WTC11 (cell line): ENCODE measurements at regions of chr4 and their contacts with region 1.

Region 1: DNA sequence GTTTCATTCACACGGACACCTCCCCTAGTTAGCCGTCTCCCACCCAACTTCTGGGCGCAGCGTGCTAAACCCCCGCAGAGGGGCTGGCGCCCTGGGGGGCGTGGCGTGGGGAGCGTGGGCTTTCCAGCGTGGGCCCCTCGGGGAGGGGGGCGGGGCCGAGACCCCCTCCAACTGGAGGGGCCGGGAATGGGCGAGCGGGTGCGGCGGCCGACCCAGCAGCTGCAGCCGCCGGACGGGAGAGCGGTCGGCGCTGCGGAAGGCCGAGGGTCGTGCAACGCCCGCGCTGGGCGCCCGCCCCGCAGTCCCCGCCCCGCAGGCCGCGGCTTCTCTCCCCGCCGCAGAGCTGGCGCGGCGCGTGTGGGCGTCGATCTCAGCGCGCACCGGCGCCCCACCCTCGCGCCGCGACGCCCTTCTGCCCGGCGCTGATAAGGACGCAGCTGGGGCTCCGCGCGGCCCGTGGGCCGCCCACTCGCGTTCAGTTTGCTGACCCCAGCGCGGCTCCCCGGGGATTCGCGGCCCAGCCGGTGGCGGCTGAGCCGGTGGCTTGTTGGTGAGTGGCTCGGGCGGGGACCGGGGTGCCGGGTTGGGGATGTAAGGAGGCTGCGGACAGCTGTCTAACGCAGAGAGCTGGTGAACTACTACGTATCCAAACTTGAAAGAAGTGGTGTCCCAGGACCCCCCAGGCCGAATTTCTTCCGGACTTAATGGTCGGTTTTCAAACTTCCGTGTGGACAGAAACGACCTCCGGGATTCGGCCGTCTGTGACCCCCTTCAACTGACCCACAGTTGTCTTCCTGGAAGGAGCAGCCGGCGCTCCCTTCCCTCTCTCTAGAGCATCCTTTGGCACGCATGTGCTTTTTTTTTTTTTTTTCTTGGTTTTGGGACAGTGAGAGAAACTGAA is 1.5 kb downstream of the FHDC1 start:
- DNase-seq: peak; percentile 37
- ATAC-seq: no peak
- H3K4me3 Mint-ChIP-seq: peak overlapping the region; percentile 84
- H3K27ac Mint-ChIP-seq: no peak overlapping the region
- H3K4me1 Mint-ChIP-seq: peaks cover 49% of the 10 kb centered on the region
- H3K27me3 Mint-ChIP-seq: peaks cover 27% of the 10 kb centered on the region
- CTCF ChIP-seq: no peak

Region 2: GRCh38 chr4:152779513-152780266 is 157.9 kb before region 1 on chr4 and contains the starts of genes ARFIP1 and TIGD4:
- CTCF ChIA-PET with region 1: interaction called, 11 read pairs
- POLR2A ChIA-PET with region 1: interaction called, 18 read pairs
- DNase-seq: peak; percentile 99
- ATAC-seq: peak; percentile 93
- H3K4me3 Mint-ChIP-seq: peak within 1 kb of the TSS; percentile 99
- H3K27ac Mint-ChIP-seq: peak within 1 kb of the TSS; percentile 100
- H3K4me1 Mint-ChIP-seq: peaks cover 27% of the 10 kb centered on the region
- H3K27me3 Mint-ChIP-seq: no peaks in the 10 kb centered on the region; the same call in 1 of the 2 replicates
- CTCF ChIP-seq: no peak
- total RNA-seq, gene ARFIP1: 29.2 to 35.3 TPM (median 31.2 TPM) in 3 replicates
- total RNA-seq, gene TIGD4: 1.9 to 2.5 TPM (median 2.0 TPM) in 3 replicates

Region 3: GRCh38 chr4:152807294-152807829 is 130.2 kb before region 1 on chr4:
- CTCF ChIA-PET with region 1: no interaction called
- POLR2A ChIA-PET with region 1: no interaction called
- DNase-seq: no peak
- ATAC-seq: no peak
- H3K4me3 Mint-ChIP-seq: no peak overlapping the region
- H3K27ac Mint-ChIP-seq: 0 out of 2 replicates have a peak overlapping the region, but pooled peaks have one; percentile 29
- H3K4me1 Mint-ChIP-seq: peaks cover 62% of the 10 kb centered on the region
- H3K27me3 Mint-ChIP-seq: peaks cover 9% of the 10 kb centered on the region
- CTCF ChIP-seq: no peak

Region 4: GRCh38 chr4:152850377-152850776 is 87.2 kb before region 1 on chr4:
- CTCF ChIA-PET with region 1: interaction called, 6 read pairs
- POLR2A ChIA-PET with region 1: interaction called, 11 read pairs
- DNase-seq: peak; percentile 25
- ATAC-seq: peak; percentile 89
- H3K4me3 Mint-ChIP-seq: peak overlapping the region; percentile 48
- H3K27ac Mint-ChIP-seq: peak overlapping the region; percentile 99
- H3K4me1 Mint-ChIP-seq: peaks cover 56% of the 10 kb centered on the region
- H3K27me3 Mint-ChIP-seq: peaks cover 4% of the 10 kb centered on the region; the same call in 1 of the 2 replicates
- CTCF ChIP-seq: no peak

Region 5: DNA sequence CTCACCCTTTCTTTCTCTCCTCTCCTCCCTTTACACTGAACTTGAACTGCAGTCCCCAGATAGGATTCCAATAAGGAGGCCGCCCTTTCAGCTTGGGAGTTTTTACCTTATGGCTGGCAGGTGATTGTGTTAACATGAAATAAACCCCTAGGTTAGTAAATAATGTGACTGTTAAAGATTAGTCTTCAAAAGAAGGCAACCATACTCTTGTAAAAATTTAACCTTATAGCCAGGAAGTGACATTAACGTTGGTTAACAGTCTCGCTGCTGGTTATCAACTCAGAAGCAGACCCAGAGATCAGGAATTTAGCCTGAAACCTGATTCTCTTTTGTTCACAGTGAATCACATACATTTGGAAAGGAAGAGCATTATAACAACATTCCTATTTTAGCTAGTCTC is 13.8 kb after region 1 on chr4:
- CTCF ChIA-PET with region 1: interaction called, 26 read pairs
- POLR2A ChIA-PET with region 1: interaction called, 11 read pairs
- DNase-seq: no peak
- ATAC-seq: peak; percentile 45
- H3K4me3 Mint-ChIP-seq: peak overlapping the region; percentile 10
- H3K27ac Mint-ChIP-seq: peak overlapping the region; percentile 98
- H3K4me1 Mint-ChIP-seq: peaks cover 65% of the 10 kb centered on the region
- H3K27me3 Mint-ChIP-seq: no peaks in the 10 kb centered on the region
- CTCF ChIP-seq: no peak

Region 6: DNA sequence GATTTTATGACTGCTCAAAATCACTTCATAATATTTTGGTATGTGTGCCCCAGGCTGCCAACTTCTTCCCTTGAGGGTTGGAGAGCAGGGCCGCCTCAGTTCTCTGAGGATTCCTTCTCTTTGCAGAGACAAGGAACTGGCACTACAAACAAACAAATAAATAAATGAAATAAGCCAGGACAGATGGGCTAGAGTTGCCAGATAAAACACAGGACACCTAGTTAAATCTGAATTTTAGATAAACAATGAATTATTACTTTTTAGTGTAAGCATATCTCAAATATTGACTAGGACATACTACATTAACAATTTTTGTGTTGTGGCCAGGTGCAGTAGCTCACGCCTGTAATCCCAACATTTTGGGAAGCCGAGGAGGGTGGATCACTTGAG is 121.1 kb after region 1 on chr4:
- CTCF ChIA-PET with region 1: no interaction called
- POLR2A ChIA-PET with region 1: no interaction called
- DNase-seq: no peak
- ATAC-seq: no peak
- H3K4me3 Mint-ChIP-seq: no peak overlapping the region
- H3K27ac Mint-ChIP-seq: no peak overlapping the region
- H3K4me1 Mint-ChIP-seq: 0 out of 2 replicates have a peak, but pooled peaks cover 2% of the 10 kb centered on the region
- H3K27me3 Mint-ChIP-seq: no peaks in the 10 kb centered on the region; the same call in 1 of the 2 replicates
- CTCF ChIP-seq: no peak

Region 7: GRCh38 chr4:153127760-153128494 is 190.3 kb after region 1 on chr4:
- CTCF ChIA-PET with region 1: interaction called, 31 read pairs
- POLR2A ChIA-PET with region 1: no interaction called
- DNase-seq: peak; percentile 91
- ATAC-seq: peak; percentile 78
- H3K4me3 Mint-ChIP-seq: peak overlapping the region; percentile 47
- H3K27ac Mint-ChIP-seq: peak overlapping the region; percentile 84
- H3K4me1 Mint-ChIP-seq: peaks cover 18% of the 10 kb centered on the region
- H3K27me3 Mint-ChIP-seq: peaks cover 2% of the 10 kb centered on the region; the same call in 1 of the 2 replicates
- CTCF ChIP-seq: peak; percentile 71

Region 8: DNA sequence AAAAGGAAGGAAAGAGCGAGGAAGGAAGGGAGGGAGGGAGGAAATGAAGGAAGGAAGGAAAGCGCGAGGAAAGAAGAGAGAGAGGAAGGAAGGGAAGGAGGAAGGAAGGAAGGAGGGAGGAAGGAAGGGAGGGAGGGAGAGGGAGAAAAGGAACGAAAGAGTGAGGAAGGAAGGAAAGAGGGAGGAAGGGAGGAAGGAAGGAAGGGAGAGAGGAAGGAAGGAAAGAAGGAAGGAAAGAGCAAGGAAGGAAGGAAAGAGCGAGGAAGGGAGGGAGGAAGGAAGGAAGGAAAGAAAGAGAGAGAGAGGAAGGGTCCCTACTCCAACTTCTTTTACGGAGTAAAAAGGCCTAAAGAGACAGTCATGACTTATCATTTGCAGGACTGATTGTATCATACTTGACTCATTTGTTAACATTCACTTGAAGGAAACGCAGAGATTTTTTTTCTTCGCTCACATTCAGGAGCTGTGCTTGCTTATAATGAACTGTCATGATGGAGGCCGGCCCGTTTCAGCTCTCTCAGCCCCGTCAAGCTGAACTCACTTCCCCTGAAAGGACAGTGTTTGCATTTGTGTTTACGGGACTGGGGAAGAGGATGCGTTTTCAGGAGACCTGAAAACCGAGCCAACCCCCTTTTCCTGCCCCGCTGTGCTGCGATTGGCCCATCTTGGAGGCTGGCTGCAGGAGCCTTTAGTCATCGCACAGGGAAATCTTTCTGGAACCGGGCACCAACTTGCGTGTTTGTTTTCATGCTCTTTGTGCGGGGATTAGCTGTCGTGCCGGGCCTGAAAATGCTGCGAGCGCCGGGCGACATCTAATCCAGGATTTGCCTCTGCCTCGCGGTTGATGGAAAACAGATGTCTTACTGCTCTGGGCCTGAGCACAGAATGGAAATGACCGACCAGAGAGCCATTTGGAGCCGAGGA is 284.5 kb after region 1 on chr4:
- CTCF ChIA-PET with region 1: no interaction called
- POLR2A ChIA-PET with region 1: no interaction called
- DNase-seq: peak; percentile 60
- ATAC-seq: peak; percentile 83
- H3K4me3 Mint-ChIP-seq: peak overlapping the region; percentile 86
- H3K27ac Mint-ChIP-seq: peak overlapping the region; percentile 75
- H3K4me1 Mint-ChIP-seq: peaks cover 29% of the 10 kb centered on the region
- H3K27me3 Mint-ChIP-seq: peaks cover 22% of the 10 kb centered on the region
- CTCF ChIP-seq: no peak